CD14-positive monocyte (primary cell): ENCODE measurements at regions of chr1 and their contacts with region 1.

Region 1: DNA sequence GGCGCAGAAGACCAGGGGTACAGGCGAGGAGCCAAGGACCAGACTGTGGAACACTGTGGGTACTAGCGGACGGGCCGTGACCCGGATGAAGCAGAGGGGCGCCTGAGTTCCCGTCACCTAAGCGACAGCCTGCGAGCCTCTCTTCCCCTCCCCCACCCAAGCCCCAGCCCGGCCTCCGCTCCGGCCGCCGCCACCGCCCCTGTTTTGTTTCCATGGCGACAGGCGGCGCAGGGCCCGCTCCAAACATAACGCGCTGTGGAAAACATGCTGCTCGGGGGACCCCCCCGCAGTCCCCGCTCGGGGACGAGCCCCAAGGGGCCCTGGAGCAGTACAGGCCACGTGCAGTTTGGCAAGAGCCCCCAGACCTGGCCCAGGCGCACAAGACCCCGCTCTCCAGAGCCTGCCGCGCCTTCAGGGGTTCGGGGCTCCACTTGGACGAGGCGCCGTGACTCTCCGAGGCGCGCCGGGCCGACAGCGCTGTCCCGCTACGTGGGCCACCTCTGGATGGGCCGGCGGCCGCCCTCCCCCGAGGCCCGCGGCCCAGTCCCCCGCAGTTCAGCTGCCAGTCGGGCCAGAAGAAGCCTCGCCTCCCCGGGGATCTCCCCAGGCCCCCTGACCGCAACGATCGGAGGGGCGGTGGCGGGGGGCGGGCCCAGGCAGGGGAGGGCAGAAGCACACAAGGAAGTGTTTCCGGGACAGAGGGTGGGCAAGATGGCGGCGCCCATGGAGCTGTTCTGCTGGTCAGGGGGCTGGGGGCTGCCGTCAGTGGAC is at the start of gene MTX1:
- DNase-seq: peak; percentile 90 to 93 (median 92)
- H3K4me3 ChIP-seq: peak within 1 kb of the TSS; percentile 90 to 94 (median 92)
- H3K4me3 Mint-ChIP-seq: peak within 1 kb of the TSS; percentile 83 to 89
- H3K27ac ChIP-seq: peak within 1 kb of the TSS; percentile 98 to 100
- H3K27ac Mint-ChIP-seq: peak within 1 kb of the TSS; percentile 97 to 100 (median 99)
- H3K4me1 ChIP-seq: peaks cover 52 to 55% of the 10 kb centered on the region in 2 donors
- H3K4me1 Mint-ChIP-seq: peaks cover 47% of the 10 kb centered on the region
- H3K27me3 ChIP-seq: no peaks in the 10 kb centered on the region
- H3K27me3 Mint-ChIP-seq: no peaks in the 10 kb centered on the region
- CTCF ChIP-seq: no peak
- polyA plus RNA-seq, gene MTX1: 79.7 to 101 (median 86.0) TPM

Region 2: GRCh38 chr1:155227261-155228095 is 18.8 kb after region 1 on chr1:
- intact Hi-C with region 1: loop called (anchors 1 to 2 kb)
- DNase-seq: peak; percentile 95 to 97 (median 97)
- H3K4me3 ChIP-seq: peak overlapping the region; percentile 62 to 87 (median 68)
- H3K4me3 Mint-ChIP-seq: peak overlapping the region; percentile 80 to 90
- H3K27ac ChIP-seq: peak overlapping the region; percentile 58 to 80
- H3K27ac Mint-ChIP-seq: peak overlapping the region; percentile 89 to 95 (median 93)
- H3K4me1 ChIP-seq: peaks cover 54 to 57% of the 10 kb centered on the region in 2 donors
- H3K4me1 Mint-ChIP-seq: peaks cover 44% of the 10 kb centered on the region
- H3K27me3 ChIP-seq: no peaks in the 10 kb centered on the region
- H3K27me3 Mint-ChIP-seq: peaks cover 2 to 8% (median 4%) of the 10 kb centered on the region in 3 donors
- CTCF ChIP-seq: no peak

Region 3: GRCh38 chr1:155244368-155245162 is 35.8 kb after region 1 on chr1:
- intact Hi-C with region 1: loop called (anchors 5 kb)
- DNase-seq: peak; percentile 93 to 94 (median 93)
- H3K4me3 ChIP-seq: peak overlapping the region; percentile 67 to 95 (median 75)
- H3K4me3 Mint-ChIP-seq: peak overlapping the region; percentile 80 to 98
- H3K27ac ChIP-seq: peak overlapping the region; percentile 71 to 74
- H3K27ac Mint-ChIP-seq: peak overlapping the region; percentile 84 to 95 (median 93)
- H3K4me1 ChIP-seq: peaks cover 41 to 53% of the 10 kb centered on the region in 2 donors
- H3K4me1 Mint-ChIP-seq: peaks cover 52% of the 10 kb centered on the region
- H3K27me3 ChIP-seq: no peaks in the 10 kb centered on the region
- H3K27me3 Mint-ChIP-seq: peaks cover 0 to 8% (median 2%) of the 10 kb centered on the region in 3 donors
- CTCF ChIP-seq: peak; percentile 27